ENCODE measurements at regions of chr13 and their contacts with region 1.

Region 1: GRCh38 chr13:54928071-54928470 is 1899.5 kb downstream of the OLFM4 start:
- DNase-seq: no peak
- H3K4me3 Mint-ChIP-seq: no peak overlapping the region
- H3K27ac Mint-ChIP-seq: no peak overlapping the region
- H3K4me1 Mint-ChIP-seq: no peaks in the 10 kb centered on the region
- H3K27me3 Mint-ChIP-seq: no peaks in the 10 kb centered on the region

Region 2: GRCh38 chr13:54676526-54677113 is 251.5 kb before region 1 on chr13:
- CTCF ChIA-PET with region 1: no interaction called
- intact Hi-C with region 1: no loop called
- DNase-seq: no peak
- H3K4me3 Mint-ChIP-seq: no peak overlapping the region
- H3K27ac Mint-ChIP-seq: no peak overlapping the region
- H3K4me1 Mint-ChIP-seq: no peaks in the 10 kb centered on the region
- H3K27me3 Mint-ChIP-seq: no peaks in the 10 kb centered on the region

Region 3: GRCh38 chr13:54775501-54776145 is 152.4 kb before region 1 on chr13:
- CTCF ChIA-PET with region 1: no interaction called
- intact Hi-C with region 1: loop called (anchors 5 kb)
- DNase-seq: no peak
- H3K4me3 Mint-ChIP-seq: no peak overlapping the region
- H3K27ac Mint-ChIP-seq: no peak overlapping the region
- H3K4me1 Mint-ChIP-seq: no peaks in the 10 kb centered on the region
- H3K27me3 Mint-ChIP-seq: no peaks in the 10 kb centered on the region

Measured in activated naive CD4-positive, alpha-beta T cell treated with anti-CD3 and anti-CD28 coated beads for 36 hours (primary cell).